ENCODE measurements at regions of chr11 and their contacts with region 1.

Region 1: DNA sequence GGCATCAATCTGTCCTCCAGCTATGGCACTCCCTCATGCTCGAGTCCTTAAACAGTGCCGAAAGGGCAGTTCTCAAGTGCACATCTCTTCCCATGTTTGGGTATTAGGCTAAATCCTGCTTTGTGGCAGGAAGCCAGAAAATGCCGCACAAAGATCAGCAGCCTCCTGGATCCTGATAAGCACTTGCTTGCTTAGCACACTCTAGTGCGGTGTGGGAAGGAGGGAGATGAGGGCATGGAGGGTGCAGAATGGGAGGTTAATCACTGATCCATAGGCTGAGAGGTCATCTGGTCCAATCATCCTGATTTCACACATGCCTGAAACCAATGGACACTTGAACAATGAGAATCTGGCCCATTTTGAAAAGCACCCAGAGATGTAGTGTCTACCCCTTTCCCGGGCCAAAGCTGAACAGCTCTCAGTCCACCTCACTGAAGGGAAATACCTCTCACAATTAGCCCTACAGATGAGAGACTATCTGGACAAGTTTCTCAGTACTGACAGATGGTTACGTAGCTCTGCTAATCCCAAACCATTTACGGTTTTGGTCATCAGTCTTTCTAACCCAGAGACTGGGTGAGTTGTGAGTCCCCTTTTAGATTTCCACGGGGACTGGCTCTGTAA is 29.8 kb upstream of the CHRM4 start:
- DNase-seq: no peak
- ATAC-seq: no peak

Region 2: DNA sequence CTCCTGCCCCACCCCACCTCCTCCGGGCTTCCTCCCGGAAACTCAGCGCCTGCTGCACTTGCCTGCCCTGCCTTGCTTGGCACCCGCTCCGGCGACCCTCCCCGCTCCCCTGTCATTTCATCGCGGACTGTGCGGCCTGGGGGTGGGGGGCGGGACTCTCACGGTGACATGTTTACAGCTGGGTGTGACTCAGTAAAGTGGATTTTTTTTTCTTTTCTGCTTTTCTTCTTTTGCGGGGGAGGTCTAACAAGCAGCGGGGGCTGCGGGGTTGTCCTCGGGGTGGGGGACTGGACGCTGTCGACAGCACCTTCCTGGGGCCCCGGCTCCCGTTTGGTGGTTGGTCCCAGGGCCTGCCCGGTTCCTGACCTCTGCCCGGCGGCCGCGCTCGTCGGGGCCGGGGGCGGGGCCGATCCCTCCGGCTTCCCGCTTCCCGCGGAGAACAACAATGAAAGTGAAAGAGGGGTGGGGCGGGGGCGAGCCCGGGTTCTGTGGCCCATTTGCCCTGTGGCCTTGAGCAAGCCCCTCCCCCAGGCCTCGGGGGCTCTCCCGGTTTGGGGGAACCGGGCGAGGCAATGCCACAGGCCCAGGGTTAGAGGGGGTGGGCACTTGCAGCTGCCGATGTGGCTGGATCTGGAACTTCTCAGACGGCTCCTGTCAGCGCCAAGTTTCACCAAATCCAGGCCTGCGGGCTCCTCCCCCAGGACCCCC is 40.9 kb before region 1 on chr11:
- intact Hi-C with region 1: no loop called
- DNase-seq: peak; percentile 85
- ATAC-seq: peak; percentile 65

Region 3: DNA sequence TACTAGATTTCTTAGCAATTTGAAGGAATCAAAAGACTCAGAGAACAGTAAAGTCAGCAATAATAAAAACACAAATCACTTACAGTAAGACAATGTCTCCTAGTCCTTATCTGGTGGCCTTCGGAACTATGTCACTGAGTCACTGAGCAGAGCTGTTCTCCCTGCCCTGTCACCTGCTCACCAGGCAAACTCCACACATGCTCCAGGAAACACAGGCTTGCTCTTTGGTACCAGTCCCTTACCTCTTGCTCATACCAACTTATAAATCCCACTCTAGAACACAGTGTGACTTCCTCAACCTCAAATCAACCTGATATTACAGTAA is 51.3 kb after region 1 on chr11:
- intact Hi-C with region 1: loop called (anchors 2 kb)
- DNase-seq: no peak
- ATAC-seq: no peak

Region 4: DNA sequence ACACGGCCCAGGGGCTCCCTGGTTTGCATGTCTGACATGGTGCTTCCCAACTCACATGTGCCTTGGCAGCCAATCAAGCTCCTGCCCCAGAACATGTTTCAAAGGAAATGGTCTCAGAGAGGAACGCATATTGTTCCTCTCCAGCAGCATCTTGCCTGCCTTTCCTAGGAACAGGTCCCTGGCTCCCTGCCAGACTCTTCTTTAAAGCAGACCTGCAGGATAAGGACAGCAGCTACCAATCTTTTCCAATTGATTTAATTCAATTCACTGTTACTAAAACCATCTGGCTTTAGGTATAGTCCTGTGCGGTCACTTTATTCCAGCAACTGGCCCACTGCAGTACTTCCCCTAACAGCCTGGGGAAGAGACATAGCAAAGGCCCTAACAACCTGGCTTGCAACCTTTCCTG is 92.6 kb after region 1 on chr11:
- intact Hi-C with region 1: no loop called
- DNase-seq: peak; percentile 63
- ATAC-seq: peak; percentile 15

Region 5: DNA sequence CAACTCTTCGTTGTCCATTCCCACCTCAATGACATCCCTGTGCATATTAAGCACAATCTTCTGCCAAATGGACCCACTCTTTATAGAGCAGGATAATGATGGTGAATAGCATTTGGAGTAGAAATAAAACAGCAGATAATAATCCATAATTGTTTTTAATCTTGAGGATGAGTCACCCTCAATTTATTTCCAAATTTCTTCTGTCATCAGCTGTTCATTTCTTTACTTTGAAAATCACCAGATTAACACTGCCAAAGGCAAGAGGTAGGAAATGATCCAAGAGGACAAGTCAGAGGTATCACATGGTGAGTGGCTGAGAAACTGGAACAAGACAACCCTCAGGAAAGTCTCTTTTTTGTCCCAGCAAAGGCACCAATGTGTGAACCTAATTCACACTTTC is 179.8 kb after region 1 on chr11:
- intact Hi-C with region 1: no loop called
- DNase-seq: no peak
- ATAC-seq: peak; percentile 60

Measured in sciatic nerve (tissue), 2 donors.